ENCODE measurements at regions of chr11 and their contacts with region 1.

Region 1: GRCh38 chr11:66288671-66289547 is at the start of gene YIF1A:
- DNase-seq: peak; percentile 99
- ATAC-seq: peak; percentile 94
- H3K4me3 ChIP-seq: peak within 1 kb of the TSS; percentile 71 to 96
- H3K27ac ChIP-seq: peak within 1 kb of the TSS; percentile 76
- H3K4me1 ChIP-seq: peaks cover 22 to 45% of the 10 kb centered on the region in 2 experiments
- H3K27me3 ChIP-seq: no peaks in the 10 kb centered on the region
- CTCF ChIP-seq: no peak
- POLR2A ChIP-seq: peak; percentile 38
- RAD21 ChIP-seq: no peak
- total RNA-seq, gene YIF1A: 54.7 TPM

Region 2: GRCh38 chr11:66268283-66268951 is 20.5 kb before region 1 on chr11 and contains the start of gene RAB1B:
- CTCF ChIA-PET with region 1: interaction called, 8 read pairs
- POLR2A ChIA-PET with region 1: interaction called, 13 read pairs
- RAD21 ChIA-PET with region 1: no interaction called
- intact Hi-C with region 1: no loop called
- DNase-seq: peak; percentile 99
- ATAC-seq: peak; percentile 85
- H3K4me3 ChIP-seq: peak within 1 kb of the TSS; percentile 93 to 99
- H3K27ac ChIP-seq: peak within 1 kb of the TSS; percentile 69
- H3K4me1 ChIP-seq: peaks cover 6 to 26% of the 10 kb centered on the region in 2 experiments
- H3K27me3 ChIP-seq: no peaks in the 10 kb centered on the region
- CTCF ChIP-seq: no peak
- POLR2A ChIP-seq: peak; percentile 38
- RAD21 ChIP-seq: no peak
- total RNA-seq, gene RAB1B: 148 TPM

Region 3: DNA sequence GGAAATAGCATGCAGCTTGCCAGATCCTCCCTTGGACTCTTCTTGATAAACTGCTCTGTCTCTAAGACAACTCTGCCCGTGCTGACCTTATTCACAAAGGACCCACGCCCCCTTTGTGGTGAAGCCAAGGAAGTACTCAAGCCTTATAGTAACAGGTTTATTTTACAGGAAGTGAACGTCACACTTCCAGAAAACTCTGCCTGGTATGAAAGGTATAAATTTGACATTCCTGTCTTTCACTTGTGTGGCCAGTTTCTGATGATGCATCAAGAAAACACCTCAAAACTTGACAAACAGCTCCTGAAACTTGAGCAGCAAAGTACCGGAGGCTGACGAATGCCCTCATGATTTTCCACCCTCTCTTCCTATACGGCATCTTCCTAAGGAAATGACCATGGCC is 165.3 kb after region 1 on chr11:
- CTCF ChIA-PET with region 1: no interaction called
- POLR2A ChIA-PET with region 1: no interaction called
- RAD21 ChIA-PET with region 1: no interaction called
- intact Hi-C with region 1: no loop called
- DNase-seq: no peak
- ATAC-seq: no peak
- H3K4me3 ChIP-seq: no peak overlapping the region
- H3K27ac ChIP-seq: no peak overlapping the region
- H3K4me1 ChIP-seq: peaks cover 0 to 7% of the 10 kb centered on the region in 2 experiments; a peak in 2 of 4 replicates
- H3K27me3 ChIP-seq: no peaks in the 10 kb centered on the region
- CTCF ChIP-seq: no peak
- POLR2A ChIP-seq: no peak
- RAD21 ChIP-seq: no peak

Region 4: DNA sequence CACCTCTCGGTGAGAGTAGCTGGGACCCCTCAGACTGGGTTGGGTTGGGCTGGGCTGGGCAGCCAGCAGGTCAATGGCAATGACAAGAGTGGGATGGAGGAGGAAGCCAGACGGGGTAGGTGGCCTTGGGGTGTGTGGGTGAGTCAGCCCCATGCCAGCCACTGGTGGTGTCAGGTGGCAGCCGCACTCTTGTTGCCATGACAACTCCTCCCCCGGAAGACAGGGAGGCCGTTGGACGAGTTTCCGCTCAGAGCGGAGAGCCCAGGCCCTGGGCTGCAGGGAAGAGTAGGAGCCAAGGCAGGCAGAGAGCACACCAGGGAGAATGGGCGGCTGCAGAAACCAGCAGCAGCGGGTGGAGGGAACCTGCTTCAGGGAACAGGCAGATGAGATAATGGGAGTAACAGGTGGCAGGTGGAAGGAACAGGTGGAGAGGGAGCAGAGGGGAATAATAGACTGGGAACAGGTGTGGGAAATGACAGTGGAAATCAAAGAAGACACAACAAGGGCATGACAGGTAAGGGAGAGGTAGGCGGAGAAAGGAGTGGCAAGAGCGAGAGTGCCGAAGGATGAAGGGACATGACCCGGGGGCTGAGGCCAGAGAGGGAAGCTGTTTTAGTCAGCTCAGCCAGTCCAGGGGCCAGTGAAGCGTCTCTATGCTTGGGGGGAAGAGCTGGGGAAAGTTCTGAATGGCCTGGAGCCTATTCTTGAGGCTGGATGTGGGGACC is 431.5 kb after region 1 on chr11:
- CTCF ChIA-PET with region 1: no interaction called
- POLR2A ChIA-PET with region 1: no interaction called
- RAD21 ChIA-PET with region 1: no interaction called
- intact Hi-C with region 1: no loop called
- DNase-seq: peak; percentile 83
- ATAC-seq: peak; percentile 96
- H3K4me3 ChIP-seq: peak overlapping the region; percentile 56 to 66
- H3K27ac ChIP-seq: peak overlapping the region; percentile 90
- H3K4me1 ChIP-seq: peaks cover 24 to 37% of the 10 kb centered on the region in 2 experiments
- H3K27me3 ChIP-seq: no peaks in the 10 kb centered on the region
- CTCF ChIP-seq: no peak
- POLR2A ChIP-seq: peak; percentile 76
- RAD21 ChIP-seq: no peak